ENCODE measurements at regions of chr1 and their contacts with region 1.

Region 1: GRCh38 chr1:86913896-86914634 is at the start of gene SELENOF:
- DNase-seq: peak; percentile 97

Region 2: DNA sequence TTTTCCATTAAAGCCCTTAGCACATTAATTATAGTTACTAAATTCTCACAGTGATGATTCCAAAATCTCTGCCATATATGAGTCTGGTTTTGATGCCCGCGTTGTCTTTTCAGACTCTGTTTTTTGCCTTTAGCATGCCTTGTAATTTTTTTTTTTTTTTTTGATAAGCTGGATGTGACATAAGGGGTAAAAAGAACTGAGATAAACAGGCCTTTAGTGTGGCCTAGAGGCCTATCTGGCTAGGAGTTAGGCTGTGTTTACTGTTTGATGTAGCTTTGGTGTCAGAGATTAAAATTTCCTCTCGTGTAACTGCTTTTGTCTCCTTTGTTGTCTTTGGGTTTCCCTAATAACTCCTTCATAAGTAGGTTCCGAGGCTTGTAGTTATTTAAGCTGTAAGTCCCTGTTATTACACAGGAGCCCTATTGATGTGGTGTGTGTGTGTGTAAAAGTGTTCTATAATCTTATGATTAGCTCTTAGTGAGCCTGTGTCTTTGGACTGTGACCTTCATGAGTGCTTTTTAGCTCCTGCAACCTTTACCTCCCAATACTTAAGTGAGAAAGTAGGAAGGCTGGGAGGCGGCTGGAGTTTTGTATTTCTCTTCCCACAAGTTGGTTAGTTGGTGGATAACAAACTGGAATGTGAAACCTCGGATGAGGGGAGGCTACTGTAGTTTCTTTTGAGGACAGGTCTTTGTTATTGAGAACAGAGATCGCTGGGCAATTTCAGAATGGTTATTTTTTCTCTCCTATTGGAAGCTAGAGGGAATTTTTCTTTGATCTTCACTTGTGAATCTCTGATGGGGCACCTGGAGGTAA is 19.7 kb after region 1 on chr1:
- CTCF ChIA-PET with region 1: no interaction called
- POLR2A ChIA-PET with region 1: interaction called, 24 read pairs
- DNase-seq: no peak

Region 3: DNA sequence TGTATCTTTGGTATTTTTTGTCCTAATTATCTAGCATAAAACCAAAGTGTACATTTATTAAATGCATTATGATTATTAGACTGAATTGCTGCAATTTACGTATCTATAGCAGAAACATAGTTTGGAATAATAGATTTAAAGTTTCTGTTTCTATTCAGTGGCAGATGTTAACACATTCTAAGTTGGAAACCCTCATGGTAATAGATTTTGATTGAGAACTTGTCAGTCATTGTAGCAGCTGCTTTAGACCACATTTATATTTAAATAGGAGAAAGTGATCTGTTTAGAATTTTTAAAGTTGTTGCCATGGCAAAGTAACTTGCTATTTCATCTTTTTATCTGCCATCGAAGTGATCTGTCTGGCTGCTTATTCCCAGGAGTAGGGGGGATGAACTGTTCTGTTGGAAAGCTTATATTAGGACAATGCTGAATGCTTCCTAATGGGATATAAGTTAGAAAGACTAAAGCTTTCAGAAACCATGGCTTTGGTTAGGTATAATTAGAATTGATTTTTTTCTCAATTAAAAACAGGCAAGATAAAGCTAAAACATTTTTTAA is 62.0 kb after region 1 on chr1:
- CTCF ChIA-PET with region 1: no interaction called
- POLR2A ChIA-PET with region 1: interaction called, 10 read pairs
- DNase-seq: no peak

Region 4: DNA sequence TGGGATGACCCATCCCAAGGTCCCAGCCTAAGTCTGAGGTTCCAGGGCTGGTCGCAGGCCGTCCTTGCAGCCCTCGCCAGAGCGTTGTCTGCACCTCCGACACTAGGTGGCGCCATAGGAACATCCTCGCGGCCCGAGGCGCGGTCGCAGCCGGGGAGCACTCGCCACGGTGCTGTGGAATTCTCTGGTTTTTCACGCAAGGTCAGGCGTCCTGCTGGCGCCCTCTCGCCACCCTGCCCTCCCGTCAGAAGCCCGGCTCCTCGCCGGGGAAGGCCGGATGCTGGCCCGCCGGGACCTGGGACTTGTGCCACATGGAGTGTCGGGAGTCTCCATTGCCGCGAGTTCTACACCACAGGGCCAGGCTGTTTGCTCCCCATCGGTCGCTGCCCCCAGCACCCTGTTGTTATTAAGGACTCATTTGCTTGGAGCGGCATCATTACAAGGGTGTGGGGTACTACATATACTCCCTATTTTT is 217.8 kb after region 1 on chr1:
- CTCF ChIA-PET with region 1: no interaction called
- POLR2A ChIA-PET with region 1: no interaction called
- DNase-seq: peak; percentile 95